Endothelial cell of umbilical vein (primary cell): ENCODE measurements at regions of chr20 and their contacts with region 1.

Region 1: DNA sequence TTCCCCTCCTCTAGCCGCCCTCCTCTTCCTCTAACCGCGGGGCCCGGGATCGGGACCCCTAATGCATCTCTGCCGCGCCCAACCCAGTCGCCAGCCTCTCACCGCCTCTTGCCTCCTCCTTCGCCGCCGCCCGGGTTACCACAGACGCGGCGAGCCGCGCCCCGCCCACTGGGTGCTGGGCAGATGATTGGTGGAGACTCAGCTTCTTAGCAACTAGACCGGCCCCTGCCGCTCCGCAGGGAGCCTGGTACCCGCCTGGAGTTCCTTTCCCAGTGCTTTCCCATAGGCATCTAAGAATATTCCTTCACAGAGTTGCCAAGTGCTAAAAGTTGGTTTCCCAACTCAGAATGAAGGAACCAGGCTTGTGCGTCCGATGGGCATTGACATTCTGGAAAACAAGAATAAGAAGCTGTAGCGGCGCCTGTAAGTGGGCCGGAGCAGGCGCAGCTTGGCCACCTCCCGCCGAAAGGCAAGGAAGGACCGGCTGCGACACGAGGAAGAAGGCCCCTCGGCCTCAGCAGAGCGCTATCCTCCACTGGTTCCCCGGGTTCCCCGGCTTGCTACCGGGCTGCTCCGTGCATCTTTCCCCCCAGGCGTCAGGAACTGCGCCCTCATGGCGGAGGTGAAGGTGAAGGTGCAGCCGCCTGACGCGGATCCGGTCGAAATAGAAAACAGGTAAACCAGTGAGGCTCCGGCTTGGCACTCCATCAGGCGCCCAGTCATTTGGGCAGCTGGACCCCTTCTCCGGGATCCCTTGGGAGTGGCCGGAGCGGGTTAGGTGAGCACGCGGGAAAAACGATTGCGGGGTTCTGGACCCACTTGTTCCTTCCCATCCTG is at the starts of genes DZANK1 and POLR3F:
- DNase-seq: peak; percentile 96
- H3K4me3 ChIP-seq: peak within 1 kb of the TSS; percentile 72 to 99 (median 99)
- H3K27ac ChIP-seq: peak within 1 kb of the TSS; percentile 93
- H3K4me1 ChIP-seq: peaks cover 13% of the 10 kb centered on the region
- H3K27me3 ChIP-seq: no peaks in the 10 kb centered on the region
- CTCF ChIP-seq: no peak
- POLR2A ChIP-seq: peak; percentile 34
- total RNA-seq, gene DZANK1: 1.8 and 3.0 TPM in 2 replicates
- total RNA-seq, gene POLR3F: 9.8 and 10.2 TPM in 2 replicates

Region 2: DNA sequence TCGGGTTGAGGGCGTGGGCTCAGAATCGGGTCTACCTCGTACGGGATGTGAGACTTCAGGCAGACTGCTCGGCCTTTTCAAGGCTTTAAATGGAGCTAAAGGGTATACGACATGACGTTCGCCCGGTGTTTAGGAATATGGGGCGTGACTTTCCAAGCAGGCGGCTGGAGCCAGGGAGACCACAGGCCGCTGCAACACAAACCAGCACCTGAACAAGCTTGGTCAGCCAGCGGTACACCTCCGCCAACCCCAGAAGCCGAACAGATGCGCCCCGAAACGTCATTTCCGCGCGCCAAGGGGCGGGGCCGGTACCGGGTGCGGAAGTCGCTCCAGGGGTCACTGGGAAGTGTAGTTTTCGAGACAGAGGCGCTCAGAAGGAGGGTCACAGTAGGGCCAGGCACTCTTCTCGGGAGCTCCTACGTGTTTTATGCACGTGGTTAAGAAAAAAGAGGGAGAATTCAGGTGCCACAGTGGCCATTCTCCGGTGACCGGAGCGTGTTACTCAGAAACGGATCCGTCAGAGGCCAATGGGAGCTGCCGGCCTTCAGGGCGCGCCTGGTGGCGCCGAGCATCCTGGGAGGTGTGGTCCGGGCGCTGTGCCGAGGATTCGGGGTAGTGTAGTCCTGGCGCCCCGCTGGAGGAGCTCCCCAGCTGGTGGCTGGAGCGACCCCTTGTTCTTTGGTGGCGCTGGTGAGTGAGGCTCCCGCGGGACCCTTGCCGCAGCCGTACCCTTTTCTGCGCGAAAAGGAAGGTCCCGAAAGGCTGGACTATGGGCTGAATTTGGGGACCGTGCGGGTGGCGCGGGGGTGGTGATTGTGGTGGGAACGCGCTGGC is 179.0 kb before region 1 on chr20 and contains the start of gene ZNF133:
- CTCF ChIA-PET with region 1: interaction called, 3 read pairs
- POLR2A ChIA-PET with region 1: no interaction called
- dilution Hi-C with region 1: no loop called
- intact Hi-C with region 1: loop called (anchors 5 kb)
- DNase-seq: peak; percentile 96
- H3K4me3 ChIP-seq: peak within 1 kb of the TSS; percentile 72 to 92 (median 79)
- H3K27ac ChIP-seq: peak within 1 kb of the TSS; percentile 92
- H3K4me1 ChIP-seq: peaks cover 7% of the 10 kb centered on the region
- H3K27me3 ChIP-seq: peaks cover 0 to 8% of the 10 kb centered on the region in 2 experiments
- CTCF ChIP-seq: peak in 1 of 2 donors; percentile 7
- POLR2A ChIP-seq: peak; percentile 90
- total RNA-seq, gene ZNF133: 11.1 and 12.2 TPM in 2 replicates

Region 3: GRCh38 chr20:18412221-18412901 is 54.8 kb before region 1 on chr20:
- CTCF ChIA-PET with region 1: interaction called, 5 read pairs
- POLR2A ChIA-PET with region 1: no interaction called
- dilution Hi-C with region 1: no loop called
- intact Hi-C with region 1: loop called (anchors 1 kb)
- DNase-seq: no peak
- H3K4me3 ChIP-seq: no peak overlapping the region
- H3K27ac ChIP-seq: no peak overlapping the region
- H3K4me1 ChIP-seq: no peaks in the 10 kb centered on the region
- H3K27me3 ChIP-seq: no peaks in the 10 kb centered on the region
- CTCF ChIP-seq: no peak
- POLR2A ChIP-seq: no peak

Region 4: GRCh38 chr20:18496740-18497592 is 29.9 kb after region 1 on chr20 and contains the start of gene RBBP9:
- CTCF ChIA-PET with region 1: interaction called, 6 read pairs
- POLR2A ChIA-PET with region 1: interaction called, 5 read pairs
- dilution Hi-C with region 1: no loop called
- intact Hi-C with region 1: loop called (anchors 1 kb)
- DNase-seq: peak; percentile 85
- H3K4me3 ChIP-seq: peak within 1 kb of the TSS; percentile 52 to 86 (median 77)
- H3K27ac ChIP-seq: no peak within 1 kb of the TSS
- H3K4me1 ChIP-seq: peaks cover 10% of the 10 kb centered on the region
- H3K27me3 ChIP-seq: no peaks in the 10 kb centered on the region
- CTCF ChIP-seq: no peak
- POLR2A ChIP-seq: peak; percentile 63
- total RNA-seq, gene RBBP9: 17.0 and 17.2 TPM in 2 replicates

Region 5: DNA sequence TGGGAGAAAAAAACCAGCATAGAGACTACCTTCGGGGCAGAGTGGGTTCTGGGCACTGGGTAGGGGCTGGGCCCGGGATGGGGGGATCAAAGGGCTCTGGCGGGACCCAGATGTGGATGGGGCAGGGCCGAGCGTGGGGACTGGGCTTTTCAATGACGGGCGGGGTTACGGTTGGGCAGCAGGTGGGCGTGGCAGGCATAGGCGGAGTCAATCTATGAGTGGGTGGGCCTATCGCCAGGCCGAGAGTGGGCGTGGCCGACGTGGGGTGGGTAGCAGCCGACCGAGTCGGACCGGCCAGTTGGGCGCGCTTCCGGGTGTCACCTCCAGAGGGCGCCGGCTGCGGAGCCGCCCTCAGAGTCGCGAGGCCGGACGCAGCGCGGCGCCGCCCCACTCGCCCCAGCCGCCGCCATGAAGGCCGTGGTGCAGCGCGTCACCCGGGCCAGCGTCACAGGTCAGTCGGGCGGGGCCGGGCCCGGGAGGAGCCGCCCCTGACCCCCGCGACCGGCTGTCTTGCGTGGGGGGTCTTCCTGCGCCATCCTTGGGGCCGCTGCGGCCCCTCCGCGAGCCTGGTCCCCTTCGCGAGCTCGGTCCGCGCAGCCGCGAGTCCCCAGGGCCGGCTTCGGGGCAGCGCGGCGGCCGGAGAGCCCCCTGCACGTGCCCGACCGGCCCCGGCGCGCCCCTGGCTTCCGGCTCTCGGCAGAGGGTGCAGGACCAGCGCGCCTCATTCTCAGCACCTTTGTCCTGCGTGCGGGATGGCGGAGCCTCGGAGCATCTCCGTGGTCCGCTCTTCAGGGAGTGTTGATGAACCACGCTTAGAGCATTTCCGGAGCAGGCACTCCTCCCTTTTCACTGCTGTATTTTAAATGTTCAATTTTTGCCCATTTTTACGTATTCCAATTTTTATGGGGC is 120.8 kb after region 1 on chr20 and contains the start of gene DTD1:
- CTCF ChIA-PET with region 1: no interaction called
- POLR2A ChIA-PET with region 1: no interaction called
- dilution Hi-C with region 1: no loop called
- intact Hi-C with region 1: loop called (anchors 1 kb)
- DNase-seq: peak; percentile 85
- H3K4me3 ChIP-seq: peak within 1 kb of the TSS; percentile 65 to 83 (median 82)
- H3K27ac ChIP-seq: peak within 1 kb of the TSS; percentile 6
- H3K4me1 ChIP-seq: peaks cover 9% of the 10 kb centered on the region
- H3K27me3 ChIP-seq: peaks cover 4% of the 10 kb centered on the region in 2 experiments
- CTCF ChIP-seq: peak; percentile 70 to 78
- POLR2A ChIP-seq: peak; percentile 64
- total RNA-seq, gene DTD1: 50.8 and 62.9 TPM in 2 replicates